ENCODE measurements at regions of chr6 and their contacts with region 1.

Region 1: GRCh38 chr6:112043032-112044007 is 10.6 kb upstream of the CCN6 start:
- DNase-seq: peak; percentile 91
- ATAC-seq: peak; percentile 93
- H3K4me3 ChIP-seq: peak overlapping the region; percentile 69 to 99 (median 71)
- H3K4me3 Mint-ChIP-seq: peak overlapping the region; percentile 99
- H3K27ac ChIP-seq: peak overlapping the region; percentile 93 to 94
- H3K27ac Mint-ChIP-seq: peak overlapping the region; percentile 99
- H3K4me1 ChIP-seq: peaks cover 0 to 3% of the 10 kb centered on the region in 2 donors
- H3K4me1 Mint-ChIP-seq: peaks cover 4% of the 10 kb centered on the region
- H3K27me3 ChIP-seq: no peaks in the 10 kb centered on the region
- H3K27me3 Mint-ChIP-seq: peaks cover 5% of the 10 kb centered on the region
- CTCF ChIP-seq: peak; percentile 89

Region 2: GRCh38 chr6:110528101-110528929 is 1515.0 kb before region 1 on chr6:
- CTCF ChIA-PET with region 1: interaction called, 3 read pairs
- POLR2A ChIA-PET with region 1: no interaction called
- intact Hi-C with region 1: loop called (anchors 5 kb)
- DNase-seq: peak; percentile 74
- ATAC-seq: peak; percentile 47
- H3K4me3 ChIP-seq: no peak overlapping the region
- H3K4me3 Mint-ChIP-seq: no peak overlapping the region
- H3K27ac ChIP-seq: no peak overlapping the region
- H3K27ac Mint-ChIP-seq: no peak overlapping the region
- H3K4me1 ChIP-seq: no peaks in the 10 kb centered on the region
- H3K4me1 Mint-ChIP-seq: no peaks in the 10 kb centered on the region
- H3K27me3 ChIP-seq: peaks cover 0 to 8% (median 0%) of the 10 kb centered on the region in 4 experiments
- H3K27me3 Mint-ChIP-seq: peaks cover 6% of the 10 kb centered on the region
- CTCF ChIP-seq: peak; percentile 91

Region 3: GRCh38 chr6:111259089-111259831 is 784.1 kb before region 1 on chr6:
- CTCF ChIA-PET with region 1: interaction called, 10 read pairs
- POLR2A ChIA-PET with region 1: no interaction called
- intact Hi-C with region 1: loop called (anchors 1 kb)
- DNase-seq: peak; percentile 100
- ATAC-seq: peak; percentile 96
- H3K4me3 ChIP-seq: peak overlapping the region; percentile 63 to 91 (median 82)
- H3K4me3 Mint-ChIP-seq: peak overlapping the region; percentile 87
- H3K27ac ChIP-seq: peak overlapping the region; percentile 95
- H3K27ac Mint-ChIP-seq: peak overlapping the region; percentile 98
- H3K4me1 ChIP-seq: peaks cover 17 to 26% of the 10 kb centered on the region in 2 donors
- H3K4me1 Mint-ChIP-seq: peaks cover 25% of the 10 kb centered on the region
- H3K27me3 ChIP-seq: no peaks in the 10 kb centered on the region
- H3K27me3 Mint-ChIP-seq: peaks cover under 1% of the 10 kb centered on the region
- CTCF ChIP-seq: peak; percentile 96

Region 4: DNA sequence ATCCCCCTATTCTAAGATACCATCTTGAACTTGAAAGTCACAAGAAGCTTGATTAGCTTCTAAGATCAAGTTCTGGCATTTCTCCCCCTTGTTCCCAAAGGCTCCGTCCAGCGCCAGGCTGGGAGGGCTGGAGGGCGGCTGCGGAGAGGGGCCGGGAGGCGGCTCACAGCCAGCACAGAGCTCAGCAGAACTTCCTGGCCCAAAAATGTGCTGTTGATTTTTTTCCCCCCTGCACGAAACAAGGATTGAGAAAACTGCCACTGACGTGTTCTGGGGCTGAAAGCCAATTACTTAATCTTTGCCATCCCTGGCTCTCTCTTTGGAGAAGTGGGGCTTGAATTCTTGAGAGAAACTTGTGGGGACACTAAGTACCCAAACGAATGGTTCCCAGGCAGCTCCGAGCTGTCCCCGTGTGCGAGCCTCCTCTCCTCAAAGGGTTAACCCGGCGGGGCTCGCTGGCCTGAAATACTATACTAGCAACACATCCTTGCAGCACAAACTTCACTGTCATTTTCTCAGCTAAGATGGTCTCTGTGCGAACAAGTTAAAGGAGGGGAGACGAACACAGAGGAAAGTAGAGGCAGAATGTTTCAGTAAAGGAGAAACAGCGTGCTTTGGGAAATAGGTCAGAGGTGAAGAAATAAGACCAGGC is 438.1 kb before region 1 on chr6:
- CTCF ChIA-PET with region 1: interaction called, 5 read pairs
- POLR2A ChIA-PET with region 1: no interaction called
- intact Hi-C with region 1: loop called (anchors 1 kb)
- DNase-seq: no peak
- ATAC-seq: peak; percentile 46
- H3K4me3 ChIP-seq: peak overlapping the region; percentile 60 to 89 (median 82)
- H3K4me3 Mint-ChIP-seq: peak overlapping the region; percentile 93
- H3K27ac ChIP-seq: peak overlapping the region; percentile 76 to 78
- H3K27ac Mint-ChIP-seq: peak overlapping the region; percentile 89
- H3K4me1 ChIP-seq: peaks cover 22 to 25% of the 10 kb centered on the region in 2 donors
- H3K4me1 Mint-ChIP-seq: peaks cover 44% of the 10 kb centered on the region
- H3K27me3 ChIP-seq: no peaks in the 10 kb centered on the region
- H3K27me3 Mint-ChIP-seq: no peaks in the 10 kb centered on the region
- CTCF ChIP-seq: no peak

Region 5: DNA sequence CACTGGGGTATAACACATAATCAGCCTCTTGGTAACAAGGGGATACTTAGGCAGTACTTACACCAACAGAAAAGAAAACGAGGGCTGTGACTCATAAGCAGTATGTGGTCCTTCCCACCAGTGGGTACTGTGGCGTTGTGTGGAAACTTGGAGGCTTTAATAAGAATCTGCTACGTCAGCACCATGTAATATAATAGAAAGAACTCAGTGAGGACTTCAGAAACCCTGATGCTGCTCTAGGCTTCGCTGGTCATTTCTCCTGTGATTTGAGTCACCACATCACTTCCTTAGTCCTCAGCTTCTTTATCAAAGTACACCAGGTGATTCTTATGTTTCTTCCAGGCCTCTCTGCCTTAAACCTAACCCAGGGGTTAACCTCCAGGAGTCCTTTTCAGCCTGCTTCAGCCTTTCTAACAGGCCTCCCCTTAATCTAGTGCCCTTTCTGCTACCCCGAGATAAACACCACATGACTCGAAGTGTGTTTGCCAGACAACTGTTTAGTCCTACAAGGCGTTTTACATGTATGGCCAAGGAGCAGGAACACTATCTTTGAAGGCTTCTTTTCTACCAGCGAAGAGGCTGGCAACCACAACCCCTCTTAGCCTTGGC is 238.6 kb before region 1 on chr6:
- CTCF ChIA-PET with region 1: interaction called, 7 read pairs
- POLR2A ChIA-PET with region 1: no interaction called
- intact Hi-C with region 1: loop called (anchors 1 kb)
- DNase-seq: peak; percentile 26
- ATAC-seq: peak; percentile 62
- H3K4me3 ChIP-seq: no peak overlapping the region
- H3K4me3 Mint-ChIP-seq: peak overlapping the region; percentile 48
- H3K27ac ChIP-seq: no peak overlapping the region
- H3K27ac Mint-ChIP-seq: peak overlapping the region; percentile 70
- H3K4me1 ChIP-seq: peaks cover 31 to 39% of the 10 kb centered on the region in 2 donors
- H3K4me1 Mint-ChIP-seq: peaks cover 46% of the 10 kb centered on the region
- H3K27me3 ChIP-seq: no peaks in the 10 kb centered on the region
- H3K27me3 Mint-ChIP-seq: no peaks in the 10 kb centered on the region
- CTCF ChIP-seq: no peak

Region 6: DNA sequence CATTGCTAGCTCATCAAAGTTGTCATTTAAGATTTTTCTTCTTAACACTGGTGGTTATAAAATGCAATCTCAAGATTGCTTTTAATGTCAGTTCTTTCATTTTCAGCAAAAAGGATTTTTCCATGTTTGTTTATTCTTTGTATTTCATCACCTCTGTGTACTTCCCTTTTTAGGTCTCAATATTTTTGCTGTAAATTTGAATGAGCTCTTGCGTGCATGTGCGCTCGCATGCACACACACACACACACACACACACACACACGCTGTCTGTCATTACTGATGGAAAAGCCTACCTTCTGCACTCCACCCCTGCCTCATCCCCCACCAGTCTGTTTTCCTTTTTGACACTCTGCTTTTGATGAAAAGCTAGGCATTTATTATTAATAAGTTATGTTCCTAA is 84.8 kb before region 1 on chr6:
- CTCF ChIA-PET with region 1: no interaction called
- POLR2A ChIA-PET with region 1: no interaction called
- intact Hi-C with region 1: no loop called
- DNase-seq: peak; percentile 15
- ATAC-seq: no peak
- H3K4me3 ChIP-seq: no peak overlapping the region
- H3K4me3 Mint-ChIP-seq: no peak overlapping the region
- H3K27ac ChIP-seq: no peak overlapping the region
- H3K27ac Mint-ChIP-seq: no peak overlapping the region
- H3K4me1 ChIP-seq: no peaks in the 10 kb centered on the region
- H3K4me1 Mint-ChIP-seq: peaks cover 6% of the 10 kb centered on the region
- H3K27me3 ChIP-seq: no peaks in the 10 kb centered on the region
- H3K27me3 Mint-ChIP-seq: peaks cover 7% of the 10 kb centered on the region
- CTCF ChIP-seq: no peak

Region 7: DNA sequence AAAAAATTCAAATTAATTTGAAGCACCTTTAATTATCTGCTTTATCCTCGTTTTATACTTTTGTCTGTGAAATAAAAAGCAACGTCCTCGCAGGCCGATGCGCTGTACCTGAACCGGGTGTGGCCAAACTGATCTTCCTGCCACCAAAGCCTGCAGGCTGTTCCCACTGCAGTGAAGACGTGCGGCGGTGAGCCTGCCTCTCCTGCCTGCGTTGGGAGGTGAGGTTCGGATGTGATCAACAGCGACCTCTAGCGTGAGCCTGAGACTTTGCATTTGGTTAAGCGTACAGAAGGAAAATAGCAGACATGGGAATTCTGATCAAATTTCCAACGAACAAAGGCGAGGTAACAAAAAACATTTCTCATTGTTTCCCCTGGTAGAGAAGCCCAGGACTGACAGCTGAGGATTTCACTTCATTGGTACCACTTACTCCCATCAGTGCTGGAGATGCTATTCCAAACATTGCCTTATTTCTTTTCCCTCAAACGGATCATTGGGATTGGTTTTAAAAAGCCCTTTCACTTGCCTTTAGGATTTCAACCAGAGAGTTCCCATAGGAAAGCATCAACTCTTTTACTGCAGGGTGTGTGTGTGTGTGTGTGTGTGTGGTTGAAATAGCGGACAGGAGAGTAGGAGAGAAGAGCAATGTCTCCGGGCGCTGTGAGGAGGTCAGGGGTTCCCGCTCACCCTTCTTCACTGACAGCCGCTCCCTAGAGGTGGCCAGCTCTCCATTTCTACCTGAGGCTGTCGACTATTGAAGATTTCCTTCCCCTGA is 46.1 kb before region 1 on chr6:
- CTCF ChIA-PET with region 1: interaction called, 5 read pairs
- POLR2A ChIA-PET with region 1: interaction called, 3 read pairs
- intact Hi-C with region 1: loop called (anchors 1 kb)
- DNase-seq: peak; percentile 79
- ATAC-seq: peak; percentile 93
- H3K4me3 ChIP-seq: no peak overlapping the region
- H3K4me3 Mint-ChIP-seq: peak overlapping the region; percentile 30
- H3K27ac ChIP-seq: no peak overlapping the region
- H3K27ac Mint-ChIP-seq: no peak overlapping the region
- H3K4me1 ChIP-seq: peaks cover 4 to 6% of the 10 kb centered on the region in 2 donors
- H3K4me1 Mint-ChIP-seq: peaks cover 9% of the 10 kb centered on the region
- H3K27me3 ChIP-seq: peaks cover 0 to 11% (median 3%) of the 10 kb centered on the region in 4 experiments
- H3K27me3 Mint-ChIP-seq: peaks cover 21% of the 10 kb centered on the region
- CTCF ChIP-seq: peak; percentile 94

Region 8: GRCh38 chr6:112087136-112087911 is 44.0 kb after region 1 on chr6 and contains the starts of genes FAM229B and TUBE1:
- CTCF ChIA-PET with region 1: interaction called, 14 read pairs
- POLR2A ChIA-PET with region 1: no interaction called
- intact Hi-C with region 1: loop called (anchors 1 kb)
- DNase-seq: peak; percentile 96
- ATAC-seq: peak; percentile 97
- H3K4me3 ChIP-seq: peak within 1 kb of the TSS; percentile 69 to 88 (median 83)
- H3K4me3 Mint-ChIP-seq: no peak within 1 kb of the TSS
- H3K27ac ChIP-seq: peak within 1 kb of the TSS; percentile 84
- H3K27ac Mint-ChIP-seq: no peak within 1 kb of the TSS
- H3K4me1 ChIP-seq: peaks cover 7 to 8% of the 10 kb centered on the region in 2 donors
- H3K4me1 Mint-ChIP-seq: no peaks in the 10 kb centered on the region
- H3K27me3 ChIP-seq: peaks cover 0 to 14% (median 5%) of the 10 kb centered on the region in 4 experiments
- H3K27me3 Mint-ChIP-seq: peaks cover 15% of the 10 kb centered on the region
- CTCF ChIP-seq: no peak
- total RNA-seq, gene FAM229B: 4.0 and 4.4 TPM in 2 replicates
- total RNA-seq, gene TUBE1: 24.5 and 26.7 TPM in 2 replicates

Region 9: DNA sequence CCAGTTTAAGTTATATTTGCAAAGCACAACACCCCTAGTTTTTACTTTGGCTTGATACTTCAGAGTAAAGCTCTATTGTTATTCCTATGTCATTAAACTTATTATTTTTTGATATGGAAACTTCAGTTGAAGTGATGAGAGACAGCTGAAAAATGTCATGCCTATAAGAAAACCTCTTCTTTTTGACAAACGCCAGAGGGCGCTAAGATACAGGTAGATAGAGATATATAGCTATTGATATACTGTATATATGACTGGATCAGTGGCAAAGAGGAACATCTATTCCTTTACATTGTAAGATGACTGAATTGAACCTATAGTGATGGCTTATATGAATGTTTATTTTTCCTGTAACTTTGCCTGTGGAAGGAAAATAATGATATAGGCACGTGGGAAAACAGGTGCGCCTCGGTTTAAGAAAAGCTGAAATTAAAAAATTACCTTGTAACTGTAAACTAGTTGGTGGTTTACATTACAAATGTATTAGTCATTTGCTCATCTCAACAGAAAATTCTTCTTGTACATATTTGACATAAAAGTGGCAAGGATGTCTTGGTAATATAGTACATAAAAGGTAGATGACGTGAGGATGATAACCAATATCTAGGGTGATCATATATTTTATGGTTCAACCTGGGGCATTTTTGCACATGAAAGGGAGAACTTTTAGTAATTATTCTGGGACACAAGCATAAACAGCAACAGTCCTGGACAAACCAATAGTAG is 136.9 kb after region 1 on chr6:
- CTCF ChIA-PET with region 1: no interaction called
- POLR2A ChIA-PET with region 1: no interaction called
- intact Hi-C with region 1: no loop called
- DNase-seq: peak; percentile 80
- ATAC-seq: peak; percentile 57
- H3K4me3 ChIP-seq: no peak overlapping the region
- H3K4me3 Mint-ChIP-seq: no peak overlapping the region
- H3K27ac ChIP-seq: no peak overlapping the region
- H3K27ac Mint-ChIP-seq: no peak overlapping the region
- H3K4me1 ChIP-seq: no peaks in the 10 kb centered on the region
- H3K4me1 Mint-ChIP-seq: no peaks in the 10 kb centered on the region
- H3K27me3 ChIP-seq: peaks cover 0 to 3% (median 1%) of the 10 kb centered on the region in 4 experiments
- H3K27me3 Mint-ChIP-seq: peaks cover 32% of the 10 kb centered on the region
- CTCF ChIP-seq: peak; percentile 88

Measured in B cell (primary cell).